ENCODE measurements at regions of chr10 and their contacts with region 1.

Region 1: GRCh38 chr10:121927841-121928527 is at the start of gene ATE1:
- DNase-seq: peak; percentile 83 to 96 (median 92)

Region 2: DNA sequence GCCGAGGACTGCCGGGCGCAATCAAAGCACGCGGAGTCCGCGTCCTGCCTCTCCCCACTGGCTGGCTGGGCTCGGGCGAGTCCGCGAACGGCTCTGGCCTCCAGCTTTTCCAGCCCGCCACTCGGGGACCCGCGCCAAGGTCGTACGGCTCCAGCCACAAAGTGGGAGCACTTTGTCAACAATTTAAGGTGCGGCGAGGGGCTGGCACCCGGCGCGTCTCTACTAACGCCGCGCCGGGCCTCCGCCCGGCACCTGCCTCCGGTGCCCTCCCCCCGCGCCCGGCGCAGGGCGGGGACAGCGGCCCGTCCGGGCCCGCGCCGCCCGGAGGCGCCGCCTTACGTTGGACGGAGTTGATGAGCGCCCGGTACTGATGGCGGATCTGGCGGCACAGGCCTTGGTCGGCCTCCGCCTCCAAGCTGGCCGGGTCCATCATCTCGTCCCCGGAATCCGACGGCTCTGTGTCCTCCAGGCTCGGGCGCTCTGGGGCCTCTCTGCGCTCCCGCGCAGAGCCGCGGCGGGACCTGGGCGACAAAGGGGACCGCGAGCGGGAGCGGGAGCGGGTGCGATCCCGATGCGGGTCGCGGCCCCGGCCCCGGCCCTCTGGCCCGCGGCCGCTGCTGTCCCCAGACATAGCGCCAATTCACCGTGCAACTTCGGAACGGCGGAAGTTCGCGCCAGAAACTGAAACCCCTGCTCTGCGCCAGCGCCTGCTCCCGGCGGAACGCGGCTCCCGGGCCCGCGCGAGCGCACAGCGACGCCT is 46.7 kb after region 1 on chr10 and contains the start of gene NSMCE4A:
- intact Hi-C with region 1: loop called (anchors 2 kb)
- DNase-seq: peak; percentile 40 to 92 (median 83)

Region 3: DNA sequence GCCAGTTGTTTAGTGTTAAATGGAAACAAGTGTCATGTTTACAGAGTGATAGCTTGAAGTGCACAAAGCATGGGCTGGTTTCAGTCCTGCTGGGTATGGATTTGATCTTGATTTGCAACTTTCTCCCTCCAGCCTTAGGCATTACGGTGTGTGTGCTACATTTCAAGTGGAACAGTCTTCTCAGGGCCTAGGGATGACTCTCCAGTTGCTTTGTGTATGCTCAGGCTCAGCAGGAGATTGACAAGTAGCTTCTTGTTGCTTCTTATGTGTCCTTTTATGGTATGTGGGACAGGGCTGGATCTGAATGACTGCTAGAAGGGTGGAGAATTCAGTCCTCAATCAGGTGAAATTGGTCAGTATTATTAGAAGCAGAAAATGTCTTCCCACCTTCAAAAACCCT is 395.2 kb after region 1 on chr10:
- intact Hi-C with region 1: no loop called
- DNase-seq: peak in 1 of 42 donors; percentile 24